A673 (cell line): ENCODE measurements at regions of chr7 and their contacts with region 1.

Region 1: DNA sequence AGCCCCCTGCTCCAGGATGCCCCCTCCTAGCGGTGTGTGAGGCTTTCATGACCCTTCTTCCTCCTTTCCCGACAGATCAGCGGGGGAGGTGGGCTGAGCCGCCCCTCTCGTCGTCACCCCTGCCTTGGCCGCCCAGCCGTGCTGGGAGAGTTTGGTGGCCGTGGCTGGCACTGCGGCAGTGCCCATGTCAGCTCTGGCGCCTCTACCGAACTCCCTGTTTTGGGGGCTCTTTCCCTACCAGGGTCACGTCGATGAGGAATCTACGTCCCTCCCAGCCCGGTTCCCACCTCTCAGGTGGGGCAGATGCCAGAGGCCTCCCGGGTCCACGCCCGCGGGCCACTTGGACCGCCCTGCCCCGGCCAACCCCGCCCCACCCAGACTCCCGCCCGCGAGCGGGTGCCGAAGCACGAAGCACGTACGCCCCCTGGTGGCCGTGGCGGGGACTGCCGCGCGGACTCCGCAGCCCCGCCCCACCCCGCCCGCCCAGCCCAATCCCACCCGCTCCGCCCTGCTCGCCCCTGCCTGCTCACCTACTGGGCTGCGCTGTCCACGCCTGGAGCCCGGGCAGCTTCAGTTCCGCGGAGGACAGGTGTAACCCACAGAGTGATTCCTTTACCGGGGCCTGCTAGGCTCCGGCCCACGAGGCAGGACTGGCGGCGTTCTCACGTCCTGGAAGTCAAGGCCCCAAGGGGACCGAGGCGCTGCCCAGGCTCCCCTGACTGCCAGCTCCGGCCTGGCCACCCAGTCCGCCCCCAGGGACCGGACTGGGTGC is 127.1 kb downstream of the UBE2H start:
- DNase-seq: peak; percentile 79
- H3K4me3 ChIP-seq: peak overlapping the region; percentile 60
- H3K27ac ChIP-seq: no peak overlapping the region
- H3K4me1 ChIP-seq: peaks cover 10% of the 10 kb centered on the region
- H3K27me3 ChIP-seq: no peaks in the 10 kb centered on the region
- CTCF ChIP-seq: peak; percentile 57

Region 2: GRCh38 chr7:129494041-129494440 is 331.6 kb before region 1 on chr7:
- CTCF ChIA-PET with region 1: no interaction called
- POLR2A ChIA-PET with region 1: no interaction called
- intact Hi-C with region 1: loop called (anchors 10 kb)
- DNase-seq: no peak
- H3K4me3 ChIP-seq: no peak overlapping the region
- H3K27ac ChIP-seq: no peak overlapping the region
- H3K4me1 ChIP-seq: no peaks in the 10 kb centered on the region
- H3K27me3 ChIP-seq: no peaks in the 10 kb centered on the region
- CTCF ChIP-seq: no peak

Region 3: DNA sequence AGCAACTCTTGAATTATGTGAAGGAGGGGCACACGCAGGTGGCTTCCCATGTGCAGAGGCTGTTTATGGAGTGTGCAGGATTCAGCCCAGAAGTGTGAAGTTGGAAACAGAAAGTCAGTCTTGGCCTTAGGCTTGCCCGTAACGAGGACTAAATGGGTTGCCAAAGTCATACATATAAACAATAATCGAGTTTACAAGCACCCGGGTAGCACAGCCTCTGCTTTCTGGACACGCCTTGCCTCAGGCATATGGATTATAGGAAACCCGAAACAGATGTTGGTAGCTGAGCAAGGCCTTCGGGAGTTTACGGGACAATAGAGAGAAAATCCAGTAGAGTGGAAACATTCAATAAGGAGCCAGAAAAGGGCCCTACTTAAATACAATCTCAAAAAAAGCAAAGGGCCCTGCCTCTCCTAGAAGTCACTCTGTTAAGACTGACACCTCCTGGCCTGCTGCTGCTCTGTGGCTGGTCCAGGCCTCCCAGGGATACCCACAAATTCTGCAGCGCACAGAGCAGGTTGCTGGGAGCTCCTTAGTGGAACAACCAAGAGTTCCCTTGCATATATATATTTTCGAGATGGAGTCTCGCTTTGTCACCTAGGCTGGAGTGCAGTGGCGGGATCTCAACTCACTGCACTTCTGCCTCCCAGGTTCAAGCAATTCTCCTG is 274.9 kb before region 1 on chr7:
- CTCF ChIA-PET with region 1: no interaction called
- POLR2A ChIA-PET with region 1: no interaction called
- intact Hi-C with region 1: no loop called
- DNase-seq: peak; percentile 66
- H3K4me3 ChIP-seq: no peak overlapping the region
- H3K27ac ChIP-seq: no peak overlapping the region
- H3K4me1 ChIP-seq: no peaks in the 10 kb centered on the region
- H3K27me3 ChIP-seq: no peaks in the 10 kb centered on the region
- CTCF ChIP-seq: no peak; the same call in 1 of the 2 replicates

Region 4: DNA sequence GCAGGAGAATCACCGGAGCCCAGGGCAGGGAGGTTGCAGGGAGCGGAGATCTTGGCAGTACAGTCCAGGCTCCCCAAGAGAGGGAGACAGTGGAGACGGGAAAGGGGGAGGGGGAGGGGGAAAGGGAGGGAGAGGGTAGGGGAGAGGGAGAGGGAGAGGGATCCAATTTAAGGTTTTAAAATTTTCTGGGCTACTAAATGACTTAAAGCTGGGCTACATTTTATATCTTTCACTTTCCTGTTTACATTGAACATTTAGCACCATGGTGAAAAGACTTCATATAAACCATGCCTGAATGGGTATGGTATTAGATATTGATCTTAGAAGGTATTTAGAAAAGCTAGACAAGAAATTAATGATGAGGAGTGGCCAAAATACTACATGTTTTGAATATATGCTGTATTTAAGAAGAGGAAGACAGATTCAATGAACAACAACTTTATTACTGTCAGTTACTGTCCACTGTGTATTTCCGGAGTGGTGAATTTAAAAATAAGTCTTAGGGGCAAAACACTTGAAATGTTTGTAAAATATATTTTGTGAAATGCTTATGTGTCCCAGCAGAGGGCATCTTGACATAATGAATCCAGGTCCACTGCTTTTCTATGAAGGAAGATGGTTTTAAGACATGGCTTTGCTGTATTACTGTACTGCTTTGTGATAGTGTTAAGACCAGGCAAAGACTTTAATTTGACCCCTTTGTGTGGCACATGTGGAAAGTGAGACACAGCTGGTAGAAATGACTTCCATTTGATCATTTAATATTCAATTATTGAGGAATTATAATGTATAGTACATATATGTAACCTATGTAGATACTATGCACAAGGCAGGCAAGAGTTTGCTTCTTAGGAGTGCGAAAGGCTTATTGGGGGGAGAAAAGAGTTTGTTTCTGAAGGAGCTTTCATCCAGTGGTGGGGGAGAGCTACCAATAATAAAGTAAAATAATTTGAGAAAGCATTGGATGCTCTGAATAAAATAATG is 161.4 kb before region 1 on chr7:
- CTCF ChIA-PET with region 1: interaction called, 4 read pairs
- POLR2A ChIA-PET with region 1: no interaction called
- intact Hi-C with region 1: loop called (anchors 2 kb)
- DNase-seq: peak; percentile 65
- H3K4me3 ChIP-seq: no peak overlapping the region
- H3K27ac ChIP-seq: no peak overlapping the region
- H3K4me1 ChIP-seq: peaks cover 5% of the 10 kb centered on the region
- H3K27me3 ChIP-seq: no peaks in the 10 kb centered on the region
- CTCF ChIP-seq: peak; percentile 65